Activated CD8-positive, alpha-beta T cell treated with anti-CD3 and anti-CD28 coated beads for 36 hours (primary cell): ENCODE measurements at regions of chr5 and their contacts with region 1.

Region 1: DNA sequence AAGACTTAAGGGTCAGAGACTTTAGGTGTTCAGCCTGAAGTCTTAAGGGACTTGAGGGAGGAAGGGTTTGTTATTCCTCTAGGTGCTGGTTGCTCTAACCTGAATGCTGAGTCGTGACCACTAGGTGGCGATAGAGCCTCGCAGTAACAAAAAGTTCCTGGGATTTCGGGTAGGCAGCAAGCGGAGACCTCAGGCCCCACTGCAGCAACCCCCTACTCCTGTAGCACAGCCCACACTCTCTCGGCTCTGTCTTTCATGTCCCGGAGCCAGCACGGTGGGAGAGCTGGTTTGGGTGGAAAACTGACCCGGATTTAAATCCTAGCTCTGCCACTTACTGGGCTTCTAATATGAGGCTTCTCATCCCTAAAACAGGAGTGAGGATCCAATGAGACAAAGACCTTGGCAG is 100.3 kb upstream of the PANK3 start:
- DNase-seq: peak; percentile 79
- ATAC-seq: no peak
- H3K4me3 Mint-ChIP-seq: no peak overlapping the region
- H3K27ac Mint-ChIP-seq: no peak overlapping the region
- H3K4me1 Mint-ChIP-seq: peaks cover 6% of the 10 kb centered on the region
- H3K27me3 Mint-ChIP-seq: no peaks in the 10 kb centered on the region
- CTCF ChIP-seq: peak; percentile 87

Region 2: DNA sequence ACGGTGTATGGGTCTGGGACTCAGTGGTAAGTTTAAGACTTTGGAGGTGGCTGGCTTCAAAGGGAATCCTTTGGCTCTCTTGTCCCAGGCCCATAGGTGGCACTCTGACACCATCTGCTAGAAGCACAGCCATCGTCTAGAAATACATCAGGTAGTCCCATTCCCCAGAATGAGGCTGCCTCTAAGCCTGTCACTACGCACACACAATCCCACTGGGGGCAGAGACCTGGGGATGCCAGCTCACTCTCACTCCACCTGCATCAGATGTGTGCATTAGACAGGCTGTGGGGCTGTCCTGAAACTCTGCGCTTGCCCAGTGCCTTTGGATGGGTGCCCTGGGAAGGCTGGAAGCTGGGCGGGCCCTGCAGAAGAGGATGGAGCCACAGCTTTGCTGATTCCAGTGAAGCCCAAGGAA is 27.1 kb after region 1 on chr5:
- CTCF ChIA-PET with region 1: interaction called, 10 read pairs
- POLR2A ChIA-PET with region 1: no interaction called
- intact Hi-C with region 1: no loop called
- DNase-seq: peak; percentile 40
- ATAC-seq: no peak
- H3K4me3 Mint-ChIP-seq: no peak overlapping the region
- H3K27ac Mint-ChIP-seq: no peak overlapping the region
- H3K4me1 Mint-ChIP-seq: no peaks in the 10 kb centered on the region
- H3K27me3 Mint-ChIP-seq: no peaks in the 10 kb centered on the region
- CTCF ChIP-seq: peak; percentile 24

Region 3: DNA sequence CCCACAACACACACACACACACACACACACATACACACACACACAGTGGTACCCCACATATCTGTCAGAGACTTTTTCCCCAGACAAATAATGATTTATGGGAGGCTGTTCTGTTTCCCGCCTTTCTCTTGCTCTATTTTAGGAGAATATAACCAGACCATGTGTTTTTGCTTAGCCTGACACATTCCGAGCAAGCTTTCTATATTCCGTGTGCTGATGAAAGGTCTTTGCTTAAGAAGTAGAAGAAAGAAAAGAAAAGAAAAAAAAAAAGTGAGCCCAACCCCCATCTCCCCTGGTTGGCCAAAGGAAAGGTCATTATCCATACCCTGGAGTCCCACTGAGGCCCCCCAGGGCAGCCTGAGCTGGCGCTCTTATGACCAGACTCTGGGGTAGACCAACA is 282.8 kb after region 1 on chr5:
- CTCF ChIA-PET with region 1: no interaction called
- POLR2A ChIA-PET with region 1: no interaction called
- intact Hi-C with region 1: loop called (anchors 10 kb)
- DNase-seq: no peak
- ATAC-seq: no peak
- H3K4me3 Mint-ChIP-seq: no peak overlapping the region
- H3K27ac Mint-ChIP-seq: no peak overlapping the region
- H3K4me1 Mint-ChIP-seq: no peaks in the 10 kb centered on the region
- H3K27me3 Mint-ChIP-seq: peaks cover 3% of the 10 kb centered on the region
- CTCF ChIP-seq: no peak

Region 4: GRCh38 chr5:169302491-169303118 is 623.1 kb after region 1 on chr5:
- CTCF ChIA-PET with region 1: no interaction called
- POLR2A ChIA-PET with region 1: no interaction called
- intact Hi-C with region 1: loop called (anchors 10 kb)
- DNase-seq: peak; percentile 69
- ATAC-seq: peak; percentile 74
- H3K4me3 Mint-ChIP-seq: no peak overlapping the region
- H3K27ac Mint-ChIP-seq: no peak overlapping the region
- H3K4me1 Mint-ChIP-seq: peaks cover 10% of the 10 kb centered on the region
- H3K27me3 Mint-ChIP-seq: peaks cover 47% of the 10 kb centered on the region
- CTCF ChIP-seq: peak; percentile 90